PC-9 (cell line): ENCODE measurements at regions of chr15 and their contacts with region 1.

Region 1: DNA sequence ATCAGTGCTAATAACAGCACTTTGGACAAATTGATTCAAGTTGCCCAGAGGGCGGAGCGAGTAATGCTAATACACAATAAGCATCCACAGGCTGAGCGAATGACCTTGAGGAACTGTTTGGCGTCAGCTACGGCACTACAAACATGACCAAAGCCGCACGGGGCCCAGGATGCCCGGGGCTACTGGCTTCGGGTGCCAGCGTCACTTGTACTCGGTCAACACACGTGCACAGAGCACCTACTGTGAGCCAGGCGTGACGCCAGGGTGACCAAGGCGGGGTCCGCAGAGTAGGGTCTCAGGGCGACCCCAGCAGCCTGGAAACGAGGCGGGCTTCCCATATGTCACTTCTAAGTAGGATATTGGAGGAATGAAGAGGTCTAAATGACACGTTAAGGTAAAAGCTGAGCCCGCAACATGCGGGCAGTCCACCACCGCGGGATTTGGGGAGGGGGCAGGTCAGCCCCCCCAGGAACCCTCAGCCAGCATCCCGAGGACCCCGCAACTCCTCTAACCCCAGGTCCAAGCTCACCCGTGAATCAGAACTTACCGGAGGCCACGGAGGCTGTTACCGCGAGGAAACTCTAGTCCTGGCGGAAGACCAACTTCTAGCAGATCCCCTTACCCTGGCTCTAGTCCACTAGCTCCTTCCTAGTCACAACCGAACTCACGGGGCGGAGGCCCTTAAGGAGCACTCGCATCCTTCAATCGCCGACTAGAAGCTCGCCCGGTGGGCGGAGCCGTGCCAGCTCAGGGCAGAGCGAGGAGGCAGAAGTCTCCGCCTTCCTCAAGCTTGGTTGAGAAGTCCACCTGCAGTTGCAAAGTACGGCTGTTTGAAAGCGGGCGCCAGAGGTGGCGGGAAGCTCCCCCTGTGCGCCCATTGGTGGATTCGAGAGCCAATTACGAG is at the start of gene CEP152:
- DNase-seq: peak; percentile 98
- H3K4me3 ChIP-seq: peak within 1 kb of the TSS; percentile 87
- H3K27ac ChIP-seq: peak within 1 kb of the TSS; percentile 49
- H3K4me1 ChIP-seq: peaks cover 6% of the 10 kb centered on the region
- H3K27me3 ChIP-seq: no peaks in the 10 kb centered on the region
- CTCF ChIP-seq: no peak
- total RNA-seq, gene CEP152: 19.2 and 24.6 TPM in 2 replicates

Region 2: DNA sequence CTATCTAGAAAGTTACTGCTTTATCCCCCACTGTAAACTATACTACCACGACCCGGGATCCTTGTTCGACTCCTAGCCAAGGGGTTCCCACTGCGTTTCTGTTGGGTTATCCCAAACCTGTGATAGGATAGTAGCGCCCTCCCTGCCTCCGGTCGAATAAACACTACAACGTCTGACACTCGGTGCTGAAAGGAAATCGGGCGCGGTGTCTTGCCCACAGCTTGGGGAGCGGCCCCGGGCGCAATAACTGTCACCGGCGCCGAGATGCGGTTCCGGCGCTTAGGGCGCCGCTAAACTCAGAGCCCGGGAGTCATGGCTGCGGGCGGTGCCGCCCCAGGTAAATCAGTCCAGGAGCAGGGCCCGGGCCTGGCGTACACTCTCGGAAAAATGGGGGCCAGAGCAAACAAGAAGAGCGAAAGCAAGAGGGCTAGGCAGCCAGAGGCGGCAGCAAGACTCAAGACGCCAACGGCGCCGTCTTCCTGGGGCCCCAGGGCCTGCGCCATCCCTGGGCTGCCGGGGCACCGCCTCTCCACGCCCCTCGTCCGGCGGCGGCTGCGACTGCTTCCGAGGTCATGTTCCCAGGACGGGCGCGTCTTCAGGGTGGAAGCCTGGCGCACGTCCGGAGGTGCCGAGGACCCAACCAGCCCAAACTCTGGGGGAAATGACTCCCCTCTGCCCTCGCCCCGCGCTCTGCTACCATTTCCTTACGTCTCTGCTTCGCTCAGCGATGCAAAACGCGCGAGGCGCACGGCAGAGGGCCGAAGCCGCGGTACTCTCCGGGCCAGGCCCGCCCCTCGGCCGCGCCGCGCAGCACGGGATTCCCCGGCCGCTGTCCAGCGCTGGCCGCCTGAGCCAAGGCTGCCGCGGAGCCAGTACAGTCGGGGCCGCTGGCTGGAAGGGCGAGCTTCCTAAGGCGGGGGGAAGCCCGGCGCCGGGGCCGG is 479.5 kb before region 1 on chr15 and contains the start of gene DUT:
- CTCF ChIA-PET with region 1: no interaction called
- POLR2A ChIA-PET with region 1: interaction called, 24 read pairs
- intact Hi-C with region 1: no loop called
- DNase-seq: peak; percentile 43 to 81
- H3K4me3 ChIP-seq: peak within 1 kb of the TSS; percentile 94
- H3K27ac ChIP-seq: peak within 1 kb of the TSS; percentile 80
- H3K4me1 ChIP-seq: peaks cover 16% of the 10 kb centered on the region
- H3K27me3 ChIP-seq: no peaks in the 10 kb centered on the region
- CTCF ChIP-seq: no peak
- total RNA-seq, gene DUT: 148 and 169 TPM in 2 replicates

Region 3: DNA sequence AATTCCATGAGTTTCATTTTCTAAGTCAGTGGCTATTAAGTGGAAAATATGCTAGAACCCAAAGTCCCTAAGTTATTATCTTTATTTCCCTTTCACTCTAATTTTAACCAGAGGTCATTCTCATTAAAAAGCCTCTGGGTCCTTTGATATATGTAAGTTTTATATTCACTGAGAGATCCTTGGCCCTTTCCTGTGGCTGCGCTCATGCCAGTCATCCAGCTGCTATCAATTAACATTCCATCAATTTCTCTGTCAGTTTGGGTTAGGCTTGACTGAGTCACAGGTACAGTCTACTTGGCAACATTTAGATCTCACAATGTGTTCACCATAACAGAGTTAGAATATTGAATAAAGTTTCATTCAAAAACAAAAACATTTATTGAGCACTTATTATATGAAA is 107.1 kb before region 1 on chr15:
- CTCF ChIA-PET with region 1: no interaction called
- POLR2A ChIA-PET with region 1: no interaction called
- intact Hi-C with region 1: no loop called
- DNase-seq: no peak
- H3K4me3 ChIP-seq: no peak overlapping the region
- H3K27ac ChIP-seq: no peak overlapping the region
- H3K4me1 ChIP-seq: no peaks in the 10 kb centered on the region
- H3K27me3 ChIP-seq: no peaks in the 10 kb centered on the region
- CTCF ChIP-seq: no peak

Region 4: DNA sequence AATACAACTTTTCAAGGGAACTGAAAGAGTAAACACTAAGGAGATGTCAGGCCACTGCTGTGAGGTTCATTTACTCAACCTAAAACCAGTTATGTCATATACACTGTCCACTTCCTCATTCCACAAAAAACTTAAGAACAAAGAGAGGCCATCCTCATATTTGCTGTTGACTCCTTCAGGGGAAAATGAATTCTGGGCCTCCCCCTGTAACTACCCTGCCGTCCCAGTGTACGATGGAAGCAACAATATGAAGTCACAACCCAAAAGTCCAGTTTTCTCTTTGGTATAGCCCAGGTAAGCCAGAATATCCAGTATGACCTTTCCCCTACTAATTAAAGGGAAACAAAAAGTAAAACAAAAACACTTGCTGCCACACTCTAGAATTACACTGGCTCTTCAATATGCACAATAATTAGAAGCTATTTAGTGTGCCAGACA is 15.9 kb before region 1 on chr15:
- CTCF ChIA-PET with region 1: no interaction called
- POLR2A ChIA-PET with region 1: no interaction called
- intact Hi-C with region 1: loop called (anchors 1 kb)
- DNase-seq: peak; percentile 18 to 63
- H3K4me3 ChIP-seq: no peak overlapping the region
- H3K27ac ChIP-seq: peak overlapping the region; percentile 60
- H3K4me1 ChIP-seq: peaks cover 15% of the 10 kb centered on the region
- H3K27me3 ChIP-seq: no peaks in the 10 kb centered on the region
- CTCF ChIP-seq: no peak

Region 5: DNA sequence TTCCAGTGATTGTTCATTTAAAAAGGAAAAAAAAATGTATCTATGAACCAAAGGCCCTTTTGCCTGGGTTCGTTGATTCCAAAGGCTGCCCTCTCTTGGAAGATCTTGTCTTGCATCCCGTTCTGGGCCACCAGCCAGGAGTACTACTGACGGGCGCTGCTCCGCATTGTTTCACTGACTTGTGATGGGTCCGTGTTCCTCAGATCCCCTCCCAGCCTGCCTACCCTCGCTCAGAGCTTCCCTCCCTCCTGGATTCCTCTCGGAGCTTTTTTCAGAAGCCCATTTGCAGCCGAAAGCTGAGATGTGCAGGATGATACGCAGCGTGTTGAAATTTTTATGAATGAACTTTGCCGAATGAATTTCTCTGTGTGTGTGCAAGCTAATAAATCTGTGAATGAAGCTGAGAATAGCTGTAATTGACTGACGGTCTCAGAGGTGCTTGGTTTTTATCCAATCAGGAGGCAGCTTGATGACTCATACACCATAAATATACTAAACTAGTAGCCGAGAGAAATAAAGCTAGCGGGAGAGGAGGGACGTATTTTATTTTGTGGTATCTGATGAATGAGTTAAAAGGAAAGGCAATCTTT is 153.0 kb after region 1 on chr15 and contains the start of gene SHC4:
- CTCF ChIA-PET with region 1: no interaction called
- POLR2A ChIA-PET with region 1: no interaction called
- intact Hi-C with region 1: loop called (anchors 5 kb)
- DNase-seq: peak; percentile 24 to 59
- H3K4me3 ChIP-seq: peak within 1 kb of the TSS; percentile 70
- H3K27ac ChIP-seq: no peak within 1 kb of the TSS
- H3K4me1 ChIP-seq: 0 out of 2 replicates have a peak, but pooled peaks cover 8% of the 10 kb centered on the region
- H3K27me3 ChIP-seq: no peaks in the 10 kb centered on the region
- CTCF ChIP-seq: no peak; the same call in 1 of the 2 replicates
- total RNA-seq, gene SHC4: 0.18 and 0.44 TPM in 2 replicates